GM10248 (cell line): ENCODE measurements at regions of chr1 and their contacts with region 1.

Region 1: DNA sequence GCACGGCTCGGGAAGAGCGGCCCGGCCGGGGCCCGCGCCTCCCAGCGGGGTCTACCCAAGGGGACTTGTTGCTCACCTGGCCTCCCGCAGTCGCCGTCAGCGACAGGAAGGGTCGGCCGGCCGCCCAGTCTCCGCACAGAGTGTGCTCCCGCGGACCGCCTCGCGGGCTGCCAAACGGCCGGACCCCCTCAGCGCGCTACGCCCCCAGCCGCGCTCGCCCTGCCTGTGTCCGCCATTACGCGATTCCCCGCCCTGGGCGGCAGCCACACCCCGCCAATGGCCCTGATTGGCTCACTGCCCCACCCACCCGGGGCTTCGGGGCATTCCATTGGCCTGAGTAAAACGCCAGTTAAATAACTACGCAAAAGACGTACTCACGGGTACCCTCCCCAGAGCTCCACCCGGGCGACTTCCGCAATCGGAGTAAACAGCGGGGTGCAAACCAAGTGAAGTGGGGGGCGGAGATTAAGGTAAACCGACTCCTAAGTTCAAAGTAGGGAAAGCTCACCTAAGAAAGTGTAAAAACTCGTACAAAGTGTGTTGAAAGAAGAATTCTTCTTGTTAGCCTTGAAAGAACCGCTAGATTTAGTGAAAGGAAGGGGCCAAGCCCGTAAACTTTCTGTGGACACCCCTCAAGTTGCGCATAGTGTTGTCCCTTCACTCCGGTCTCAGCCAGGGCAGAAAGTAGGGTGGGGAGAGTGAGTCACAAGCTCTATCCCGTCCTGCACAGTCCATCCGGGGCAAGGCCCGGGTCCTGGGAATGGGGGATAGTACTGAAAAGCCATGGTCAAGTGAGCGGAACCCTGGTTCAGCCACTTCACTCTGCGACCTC is at the start of gene WASF2:
- DNase-seq: peak; percentile 93
- CTCF ChIP-seq: no peak

Region 2: GRCh38 chr1:27430903-27431600 is 59.1 kb before region 1 on chr1:
- CTCF ChIA-PET with region 1: interaction called, 10 read pairs
- POLR2A ChIA-PET with region 1: no interaction called
- DNase-seq: no peak
- CTCF ChIP-seq: no peak